Naive thymus-derived CD4-positive, alpha-beta T cell (primary cell): ENCODE measurements at regions of chr1 and their contacts with region 1.

Region 1: DNA sequence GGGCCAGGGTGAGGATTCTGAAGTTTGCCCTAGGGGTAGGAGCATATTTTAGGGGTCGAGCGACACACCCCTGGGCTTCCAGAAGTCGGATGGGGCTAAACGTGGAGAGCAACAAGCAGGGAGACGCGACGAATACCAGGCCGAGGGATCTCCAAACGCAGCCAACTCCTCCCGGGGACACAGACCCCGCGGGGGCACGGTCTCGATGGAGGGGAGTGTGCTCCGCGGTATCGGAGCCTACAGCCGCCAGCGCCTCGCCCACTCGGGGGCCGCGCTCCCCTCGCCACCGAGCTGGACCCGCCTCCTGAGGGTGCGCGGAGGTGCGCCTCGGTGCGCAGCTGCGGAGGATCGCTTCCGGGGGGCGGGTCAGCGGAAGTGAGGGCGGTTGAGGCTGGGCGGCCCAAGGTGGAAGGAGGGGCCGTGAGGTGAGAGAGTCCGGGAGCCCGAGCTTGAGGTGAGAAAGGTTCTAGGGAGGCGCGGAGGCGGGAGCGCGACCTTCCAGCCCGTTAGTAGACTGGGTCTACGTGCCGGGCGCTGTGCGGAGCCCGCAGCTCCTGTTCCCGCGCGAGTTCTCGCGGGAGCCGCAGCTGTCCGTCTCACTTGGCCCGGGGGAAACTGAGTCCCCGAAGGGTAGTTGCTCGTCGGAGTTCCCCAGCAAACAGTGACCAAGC is at the start of gene MTFR1L:
- DNase-seq: peak; percentile 82 to 96 (median 92)
- ATAC-seq: peak; percentile 92
- H3K4me3 ChIP-seq: peak within 1 kb of the TSS; percentile 97
- H3K4me3 Mint-ChIP-seq: peak within 1 kb of the TSS; percentile 91 to 100 (median 96)
- H3K27ac ChIP-seq: peak within 1 kb of the TSS; percentile 91
- H3K27ac Mint-ChIP-seq: peak within 1 kb of the TSS; percentile 92 to 99 (median 96)
- H3K4me1 ChIP-seq: peaks cover 19 to 28% of the 10 kb centered on the region in 2 donors
- H3K4me1 Mint-ChIP-seq: peaks cover 30 to 61% (median 46%) of the 10 kb centered on the region in 7 donors
- H3K27me3 ChIP-seq: no peaks in the 10 kb centered on the region
- H3K27me3 Mint-ChIP-seq: no peaks in the 10 kb centered on the region
- total RNA-seq, gene MTFR1L: 39.6 to 60.2 (median 42.3) TPM

Region 2: GRCh38 chr1:25430666-25431505 is 388.8 kb before region 1 on chr1 and contains the start of gene MACO1:
- CTCF ChIA-PET with region 1: no interaction called
- POLR2A ChIA-PET with region 1: interaction called, 12 read pairs
- intact Hi-C with region 1: loop called in 1 of 2 experiments (anchors 1 kb)
- DNase-seq: peak; percentile 93 to 99 (median 98)
- ATAC-seq: peak; percentile 91
- H3K4me3 ChIP-seq: peak within 1 kb of the TSS; percentile 100
- H3K4me3 Mint-ChIP-seq: peak within 1 kb of the TSS; percentile 93 to 99 (median 98)
- H3K27ac ChIP-seq: peak within 1 kb of the TSS; percentile 96
- H3K27ac Mint-ChIP-seq: peak within 1 kb of the TSS; percentile 96 to 100 (median 100)
- H3K4me1 ChIP-seq: peaks cover 30 to 33% of the 10 kb centered on the region in 2 donors
- H3K4me1 Mint-ChIP-seq: peaks cover 32 to 55% (median 48%) of the 10 kb centered on the region in 7 donors
- H3K27me3 ChIP-seq: no peaks in the 10 kb centered on the region
- H3K27me3 Mint-ChIP-seq: peaks cover 0 to 3% (median 0%) of the 10 kb centered on the region in 5 donors
- total RNA-seq, gene MACO1: 16.7 to 25.9 (median 22.0) TPM

Region 3: GRCh38 chr1:25580927-25581326 is 238.8 kb before region 1 on chr1:
- CTCF ChIA-PET with region 1: no interaction called
- POLR2A ChIA-PET with region 1: no interaction called
- intact Hi-C with region 1: no loop called
- DNase-seq: no peak
- ATAC-seq: peak; percentile 46
- H3K4me3 ChIP-seq: no peak overlapping the region
- H3K4me3 Mint-ChIP-seq: no peak overlapping the region
- H3K27ac ChIP-seq: no peak overlapping the region
- H3K27ac Mint-ChIP-seq: peak overlapping the region in 3 of 9 donors; percentile 13 to 77 (median 62)
- H3K4me1 ChIP-seq: no peaks in the 10 kb centered on the region
- H3K4me1 Mint-ChIP-seq: peaks cover 0 to 20% (median 14%) of the 10 kb centered on the region in 7 donors
- H3K27me3 ChIP-seq: no peaks in the 10 kb centered on the region
- H3K27me3 Mint-ChIP-seq: peaks cover 0 to 13% (median 0%) of the 10 kb centered on the region in 5 donors

Region 4: GRCh38 chr1:25642574-25643108 is 177.1 kb before region 1 on chr1:
- CTCF ChIA-PET with region 1: no interaction called
- POLR2A ChIA-PET with region 1: interaction called, 11 read pairs
- intact Hi-C with region 1: no loop called
- DNase-seq: peak; percentile 29 to 88 (median 84)
- ATAC-seq: peak; percentile 96
- H3K4me3 ChIP-seq: peak overlapping the region; percentile 53
- H3K4me3 Mint-ChIP-seq: peak overlapping the region; percentile 43 to 89 (median 72)
- H3K27ac ChIP-seq: peak overlapping the region; percentile 77
- H3K27ac Mint-ChIP-seq: peak overlapping the region; percentile 81 to 96 (median 92)
- H3K4me1 ChIP-seq: peaks cover 20 to 65% of the 10 kb centered on the region in 2 donors
- H3K4me1 Mint-ChIP-seq: peaks cover 54 to 96% (median 92%) of the 10 kb centered on the region in 7 donors
- H3K27me3 ChIP-seq: no peaks in the 10 kb centered on the region
- H3K27me3 Mint-ChIP-seq: peaks cover 0 to 85% (median 0%) of the 10 kb centered on the region in 5 donors

Region 5: GRCh38 chr1:25837262-25837875 is 17.7 kb after region 1 on chr1:
- CTCF ChIA-PET with region 1: no interaction called
- POLR2A ChIA-PET with region 1: interaction called, 32 read pairs
- intact Hi-C with region 1: loop called in 1 of 2 experiments (anchors 1 kb)
- DNase-seq: no peak
- ATAC-seq: no peak
- H3K4me3 ChIP-seq: no peak overlapping the region
- H3K4me3 Mint-ChIP-seq: no peak overlapping the region
- H3K27ac ChIP-seq: no peak overlapping the region
- H3K27ac Mint-ChIP-seq: no peak overlapping the region
- H3K4me1 ChIP-seq: peaks cover 0 to 3% of the 10 kb centered on the region in 2 donors
- H3K4me1 Mint-ChIP-seq: peaks cover 0 to 13% (median 4%) of the 10 kb centered on the region in 7 donors
- H3K27me3 ChIP-seq: no peaks in the 10 kb centered on the region
- H3K27me3 Mint-ChIP-seq: no peaks in the 10 kb centered on the region

Region 6: GRCh38 chr1:25895365-25895993 is 75.8 kb after region 1 on chr1:
- CTCF ChIA-PET with region 1: no interaction called
- POLR2A ChIA-PET with region 1: interaction called, 8 read pairs
- intact Hi-C with region 1: loop called in 1 of 2 experiments (anchors 2 kb)
- DNase-seq: peak; percentile 86 to 96 (median 93)
- ATAC-seq: peak; percentile 100
- H3K4me3 ChIP-seq: no peak overlapping the region
- H3K4me3 Mint-ChIP-seq: peak overlapping the region in 1 of 10 donors; percentile 6
- H3K27ac ChIP-seq: no peak overlapping the region
- H3K27ac Mint-ChIP-seq: peak overlapping the region in 8 of 9 donors; percentile 8 to 76 (median 40)
- H3K4me1 ChIP-seq: peaks cover 0 to 9% of the 10 kb centered on the region in 2 donors
- H3K4me1 Mint-ChIP-seq: peaks cover 7 to 31% (median 11%) of the 10 kb centered on the region in 7 donors
- H3K27me3 ChIP-seq: no peaks in the 10 kb centered on the region
- H3K27me3 Mint-ChIP-seq: no peaks in the 10 kb centered on the region

Region 7: DNA sequence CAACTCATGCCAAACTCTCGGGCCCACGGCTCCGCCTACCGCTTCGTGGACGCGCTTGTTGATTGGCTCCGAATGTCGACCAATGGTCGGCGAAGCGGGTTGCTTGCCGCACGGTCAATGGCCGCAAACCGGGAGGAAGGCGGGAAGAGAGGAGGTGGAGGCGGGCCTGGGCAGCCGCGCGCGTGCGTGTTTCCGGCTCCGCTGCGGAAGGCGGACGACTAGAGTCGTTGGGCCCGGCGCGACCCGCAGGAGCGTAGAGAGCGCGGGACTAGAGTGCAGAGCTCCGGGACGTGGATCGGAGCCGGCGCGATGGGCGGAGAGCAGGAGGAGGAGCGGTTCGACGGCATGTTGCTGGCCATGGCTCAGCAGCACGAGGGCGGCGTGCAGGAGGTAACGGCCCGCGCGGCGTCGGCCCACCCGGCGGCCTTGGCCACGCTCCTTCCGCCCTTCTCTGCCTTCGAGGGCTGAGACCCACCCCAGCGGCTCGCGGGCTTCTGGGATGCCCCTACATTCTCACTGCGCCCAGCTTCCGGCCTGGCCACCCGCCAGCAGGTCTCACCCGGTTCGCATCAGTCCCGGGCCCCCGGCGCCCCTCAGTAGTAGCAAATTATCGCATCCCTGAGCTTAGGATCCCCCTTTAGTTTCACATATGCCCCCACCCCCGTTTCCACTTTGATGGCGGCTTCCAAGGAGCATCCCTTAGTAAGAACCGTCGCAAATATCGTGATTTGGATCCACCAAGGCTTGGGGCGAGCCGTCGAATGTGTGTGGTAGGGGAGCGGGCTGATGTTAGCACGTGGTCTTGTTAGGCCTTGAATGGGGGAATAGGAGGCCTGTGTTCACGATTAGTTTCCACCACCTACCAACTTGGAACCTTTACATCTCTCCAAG is 1102.1 kb after region 1 on chr1 and contains the start of gene NUDC:
- CTCF ChIA-PET with region 1: no interaction called
- POLR2A ChIA-PET with region 1: no interaction called
- intact Hi-C with region 1: loop called in 1 of 2 experiments (anchors 1 kb)
- DNase-seq: peak; percentile 87 to 97 (median 95)
- ATAC-seq: peak; percentile 97
- H3K4me3 ChIP-seq: peak within 1 kb of the TSS; percentile 79
- H3K4me3 Mint-ChIP-seq: peak within 1 kb of the TSS; percentile 82 to 98 (median 94)
- H3K27ac ChIP-seq: peak within 1 kb of the TSS; percentile 88
- H3K27ac Mint-ChIP-seq: peak within 1 kb of the TSS; percentile 88 to 98 (median 96)
- H3K4me1 ChIP-seq: peaks cover 11 to 12% of the 10 kb centered on the region in 2 donors
- H3K4me1 Mint-ChIP-seq: peaks cover 12 to 46% (median 34%) of the 10 kb centered on the region in 7 donors
- H3K27me3 ChIP-seq: no peaks in the 10 kb centered on the region
- H3K27me3 Mint-ChIP-seq: no peaks in the 10 kb centered on the region
- total RNA-seq, gene NUDC: 36.5 to 69.0 (median 40.5) TPM